IMR-90 (cell line): ENCODE measurements at regions of chr22 and their contacts with region 1.

Region 1: GRCh38 chr22:42780070-42780540 is 59.4 kb upstream of the A4GALT start:
- DNase-seq: peak; percentile 95
- ATAC-seq: peak; percentile 83
- H3K4me3 ChIP-seq: no peak overlapping the region
- H3K27ac ChIP-seq: peak overlapping the region; percentile 36; the same call in 1 of the 2 replicates
- H3K4me1 ChIP-seq: peaks cover 4% of the 10 kb centered on the region
- H3K27me3 ChIP-seq: no peaks in the 10 kb centered on the region
- CTCF ChIP-seq: peak; percentile 98
- POLR2A ChIP-seq: no peak
- RAD21 ChIP-seq: peak; percentile 82

Region 2: GRCh38 chr22:42662114-42663021 is 117.7 kb before region 1 on chr22:
- CTCF ChIA-PET with region 1: no interaction called
- POLR2A ChIA-PET with region 1: no interaction called
- dilution Hi-C with region 1: no loop called
- in situ Hi-C with region 1: loop called (anchors 10 kb)
- intact Hi-C with region 1: no loop called
- DNase-seq: peak; percentile 53
- ATAC-seq: peak; percentile 95
- H3K4me3 ChIP-seq: peak overlapping the region; percentile 63
- H3K27ac ChIP-seq: peak overlapping the region; percentile 26; the same call in 1 of the 2 replicates
- H3K4me1 ChIP-seq: no peaks in the 10 kb centered on the region
- H3K27me3 ChIP-seq: no peaks in the 10 kb centered on the region
- CTCF ChIP-seq: peak; percentile 87
- POLR2A ChIP-seq: peak; percentile 63
- RAD21 ChIP-seq: peak; percentile 90

Region 3: DNA sequence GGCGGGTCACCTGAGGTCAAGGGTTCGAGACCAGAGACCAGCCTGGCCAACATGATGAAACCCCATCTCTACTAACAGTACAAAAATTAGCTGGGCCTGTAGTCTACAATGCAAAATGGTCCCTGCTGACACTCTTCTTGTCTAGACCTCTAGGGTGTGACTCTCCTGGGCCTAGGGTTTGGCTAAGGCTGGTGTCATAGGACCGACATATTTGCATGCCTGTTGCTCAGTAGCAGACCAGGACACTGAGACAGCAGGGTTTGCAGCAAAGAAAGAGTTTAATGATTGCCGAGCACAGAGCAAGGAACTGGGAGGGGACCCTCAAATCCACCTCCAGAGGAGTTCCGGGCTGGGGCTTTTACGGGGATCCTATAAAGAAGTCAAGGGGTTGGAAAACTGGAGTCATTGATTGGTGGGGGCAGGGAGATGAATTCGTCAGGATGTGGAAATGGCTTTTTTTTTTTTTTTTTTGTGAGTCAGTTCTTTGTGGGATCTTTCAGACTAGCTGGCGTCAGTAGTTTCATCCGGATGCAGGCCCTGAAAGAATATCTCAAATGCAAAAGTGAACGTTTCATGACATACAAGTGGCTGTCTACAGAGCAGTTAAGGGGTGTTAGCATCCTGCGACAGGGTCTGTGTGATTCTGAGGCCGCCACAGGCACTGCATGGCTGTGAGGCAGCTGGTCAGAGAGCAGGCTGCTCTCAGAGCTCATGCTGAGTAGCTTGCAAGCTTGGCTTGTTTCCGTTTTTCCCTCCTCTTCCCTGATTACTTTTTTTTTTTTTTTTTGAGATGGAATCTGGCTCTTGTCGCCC is 32.2 kb before region 1 on chr22:
- CTCF ChIA-PET with region 1: no interaction called
- POLR2A ChIA-PET with region 1: no interaction called
- dilution Hi-C with region 1: no loop called
- in situ Hi-C with region 1: no loop called
- intact Hi-C with region 1: loop called (anchors 1 kb)
- DNase-seq: peak; percentile 76
- ATAC-seq: peak; percentile 48
- H3K4me3 ChIP-seq: no peak overlapping the region
- H3K27ac ChIP-seq: peak overlapping the region; percentile 83
- H3K4me1 ChIP-seq: peaks cover 32% of the 10 kb centered on the region
- H3K27me3 ChIP-seq: no peaks in the 10 kb centered on the region
- CTCF ChIP-seq: no peak
- POLR2A ChIP-seq: no peak
- RAD21 ChIP-seq: no peak; the same call in 1 of the 2 replicates

Region 4: GRCh38 chr22:43090130-43090789 is 310.2 kb after region 1 on chr22:
- CTCF ChIA-PET with region 1: no interaction called
- POLR2A ChIA-PET with region 1: no interaction called
- dilution Hi-C with region 1: no loop called
- in situ Hi-C with region 1: no loop called
- intact Hi-C with region 1: loop called (anchors 1 kb)
- DNase-seq: peak; percentile 80
- ATAC-seq: 0 out of 2 replicates have a peak, but pooled peaks have one; percentile 15
- H3K4me3 ChIP-seq: no peak overlapping the region
- H3K27ac ChIP-seq: no peak overlapping the region
- H3K4me1 ChIP-seq: 0 out of 2 replicates have a peak, but pooled peaks cover 2% of the 10 kb centered on the region
- H3K27me3 ChIP-seq: no peaks in the 10 kb centered on the region
- CTCF ChIP-seq: peak; percentile 51
- POLR2A ChIP-seq: no peak
- RAD21 ChIP-seq: peak; percentile 67